ENCODE measurements at regions of chr11 and their contacts with region 1.

Region 1: DNA sequence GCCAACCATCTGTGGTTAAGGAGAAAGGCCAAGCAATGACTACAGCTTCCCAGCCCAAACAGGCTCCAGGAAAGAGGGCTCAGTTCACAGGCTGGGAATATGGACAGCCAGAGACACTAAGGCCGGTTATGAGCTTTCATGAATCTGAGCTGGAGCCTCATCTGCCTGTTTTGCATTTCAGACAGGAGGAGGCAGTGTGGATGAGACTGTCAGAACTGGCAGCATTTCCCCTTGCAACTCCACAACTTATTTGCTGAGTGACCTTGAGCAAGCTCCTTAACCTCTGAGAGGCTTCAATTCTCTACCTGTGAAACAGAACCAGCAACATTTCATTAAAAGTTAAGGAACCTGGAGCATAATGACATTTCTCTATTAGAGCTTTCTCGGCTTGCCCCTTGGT is 264.0 kb downstream of the ETS1 start:
- DNase-seq: peak in 3 of 5 donors; percentile 37 to 55 (median 51)
- H3K4me3 ChIP-seq: peak overlapping the region; percentile 26
- H3K4me3 Mint-ChIP-seq: peak overlapping the region; percentile 34 to 77 (median 68)
- H3K27ac ChIP-seq: peak overlapping the region; percentile 83
- H3K27ac Mint-ChIP-seq: peak overlapping the region; percentile 88 to 99 (median 96)
- H3K4me1 ChIP-seq: peaks cover 95% of the 10 kb centered on the region
- H3K4me1 Mint-ChIP-seq: peaks cover 82 to 92% (median 88%) of the 10 kb centered on the region in 3 donors
- H3K27me3 ChIP-seq: no peaks in the 10 kb centered on the region
- H3K27me3 Mint-ChIP-seq: no peaks in the 10 kb centered on the region

Region 2: DNA sequence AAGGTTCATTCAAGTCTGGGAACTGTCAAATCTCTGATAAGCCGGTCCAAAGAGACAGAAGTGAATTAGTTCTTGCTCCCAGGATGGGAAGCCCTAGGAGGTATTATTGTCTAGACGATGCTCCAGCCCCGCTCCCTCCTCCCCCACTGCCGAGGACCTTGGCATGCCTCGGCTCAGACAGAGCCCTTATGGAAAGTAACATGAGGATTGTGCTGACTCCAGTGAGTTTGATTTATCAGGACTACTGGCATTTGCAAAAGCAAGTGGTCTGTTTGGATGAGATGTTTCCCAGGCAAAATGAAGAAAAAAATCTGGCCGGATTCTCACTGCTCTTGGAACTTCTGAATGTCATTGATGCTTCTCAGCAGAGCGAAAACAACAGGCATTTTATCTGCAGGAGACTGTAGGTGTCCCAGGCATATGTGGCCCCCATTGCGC is 77.0 kb before region 1 on chr11:
- CTCF ChIA-PET with region 1: no interaction called
- POLR2A ChIA-PET with region 1: no interaction called
- DNase-seq: no peak
- H3K4me3 ChIP-seq: no peak overlapping the region
- H3K4me3 Mint-ChIP-seq: no peak overlapping the region
- H3K27ac ChIP-seq: no peak overlapping the region
- H3K27ac Mint-ChIP-seq: no peak overlapping the region
- H3K4me1 ChIP-seq: no peaks in the 10 kb centered on the region
- H3K4me1 Mint-ChIP-seq: no peaks in the 10 kb centered on the region
- H3K27me3 ChIP-seq: no peaks in the 10 kb centered on the region
- H3K27me3 Mint-ChIP-seq: peaks cover 0 to 14% of the 10 kb centered on the region in 2 donors

Region 3: GRCh38 chr11:128290106-128290840 is 33.1 kb before region 1 on chr11:
- CTCF ChIA-PET with region 1: interaction called, 21 read pairs
- POLR2A ChIA-PET with region 1: interaction called, 15 read pairs
- DNase-seq: peak; percentile 41 to 84 (median 80)
- H3K4me3 ChIP-seq: peak overlapping the region; percentile 58
- H3K4me3 Mint-ChIP-seq: peak overlapping the region; percentile 88 to 97 (median 93)
- H3K27ac ChIP-seq: peak overlapping the region; percentile 85
- H3K27ac Mint-ChIP-seq: peak overlapping the region; percentile 98 to 100 (median 99)
- H3K4me1 ChIP-seq: peaks cover 84% of the 10 kb centered on the region
- H3K4me1 Mint-ChIP-seq: peaks cover 89 to 99% (median 98%) of the 10 kb centered on the region in 3 donors
- H3K27me3 ChIP-seq: no peaks in the 10 kb centered on the region
- H3K27me3 Mint-ChIP-seq: no peaks in the 10 kb centered on the region

Region 4: DNA sequence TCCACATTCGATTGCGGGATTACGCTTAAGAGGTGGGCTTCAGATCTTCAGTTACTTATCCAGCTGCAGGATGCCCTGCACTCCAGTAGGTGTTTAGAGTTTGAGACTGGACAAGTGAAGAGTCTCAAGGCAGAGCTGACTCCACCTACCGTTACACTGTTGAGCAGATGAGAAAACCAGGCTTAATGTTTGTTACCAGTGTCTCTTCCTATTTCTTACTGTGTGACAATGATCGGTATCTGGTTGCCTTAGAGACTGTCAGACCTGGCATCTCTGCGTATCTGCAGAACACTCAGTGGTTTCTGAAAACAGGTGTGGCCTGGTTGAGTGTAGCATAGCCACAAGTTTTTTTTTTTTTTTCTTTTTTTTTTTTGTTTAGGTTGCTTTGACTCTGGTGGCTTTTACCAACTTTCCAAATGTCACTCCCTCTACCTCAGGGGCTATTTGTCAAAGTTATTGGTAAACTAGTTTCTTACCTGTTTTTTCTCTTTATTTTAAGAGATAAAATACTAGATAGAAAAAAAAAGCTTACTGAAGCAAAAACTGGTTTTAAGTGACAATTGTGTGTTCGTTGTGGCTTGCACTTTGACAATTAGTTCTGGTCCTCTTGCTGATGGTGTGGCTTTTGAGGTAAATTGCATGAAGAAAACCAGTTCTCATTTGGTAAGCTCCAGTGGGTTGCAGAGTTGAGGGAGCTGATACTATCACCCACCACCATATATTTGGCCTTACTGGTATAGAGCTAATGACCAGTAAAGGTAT is 20.8 kb before region 1 on chr11:
- CTCF ChIA-PET with region 1: interaction called, 27 read pairs
- POLR2A ChIA-PET with region 1: interaction called, 17 read pairs
- DNase-seq: peak; percentile 41 to 92 (median 90)
- H3K4me3 ChIP-seq: peak overlapping the region; percentile 76
- H3K4me3 Mint-ChIP-seq: peak overlapping the region; percentile 88 to 96 (median 92)
- H3K27ac ChIP-seq: peak overlapping the region; percentile 92
- H3K27ac Mint-ChIP-seq: peak overlapping the region; percentile 94 to 100 (median 98)
- H3K4me1 ChIP-seq: peaks cover 97% of the 10 kb centered on the region
- H3K4me1 Mint-ChIP-seq: peaks cover 82 to 98% (median 96%) of the 10 kb centered on the region in 3 donors
- H3K27me3 ChIP-seq: no peaks in the 10 kb centered on the region
- H3K27me3 Mint-ChIP-seq: no peaks in the 10 kb centered on the region

Region 5: DNA sequence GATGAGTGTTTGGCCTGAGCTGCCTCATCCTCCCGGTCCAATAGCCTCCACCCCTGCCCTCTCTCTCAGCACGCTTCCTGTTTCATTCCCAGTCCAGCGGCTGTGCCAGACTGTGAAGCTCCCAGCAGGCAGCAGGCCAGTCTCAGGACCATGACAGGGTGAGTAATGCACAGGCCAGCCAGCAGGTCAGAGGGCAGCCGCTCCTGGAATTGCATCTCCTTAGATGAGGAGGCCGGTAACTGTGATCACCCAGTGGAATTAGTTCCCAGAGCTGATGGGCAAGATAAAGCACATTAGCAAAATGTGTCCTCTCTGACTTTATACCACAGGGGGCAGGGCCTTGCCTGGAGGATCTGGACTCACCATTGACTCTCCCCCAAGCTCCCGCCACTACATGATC is 12.8 kb after region 1 on chr11:
- CTCF ChIA-PET with region 1: interaction called, 18 read pairs
- POLR2A ChIA-PET with region 1: interaction called, 3 read pairs
- DNase-seq: no peak
- H3K4me3 ChIP-seq: no peak overlapping the region
- H3K4me3 Mint-ChIP-seq: no peak overlapping the region
- H3K27ac ChIP-seq: no peak overlapping the region
- H3K27ac Mint-ChIP-seq: peak overlapping the region in 3 of 8 donors; percentile 8 to 64 (median 17)
- H3K4me1 ChIP-seq: peaks cover 23% of the 10 kb centered on the region
- H3K4me1 Mint-ChIP-seq: peaks cover 25 to 69% (median 62%) of the 10 kb centered on the region in 3 donors
- H3K27me3 ChIP-seq: no peaks in the 10 kb centered on the region
- H3K27me3 Mint-ChIP-seq: no peaks in the 10 kb centered on the region

Region 6: DNA sequence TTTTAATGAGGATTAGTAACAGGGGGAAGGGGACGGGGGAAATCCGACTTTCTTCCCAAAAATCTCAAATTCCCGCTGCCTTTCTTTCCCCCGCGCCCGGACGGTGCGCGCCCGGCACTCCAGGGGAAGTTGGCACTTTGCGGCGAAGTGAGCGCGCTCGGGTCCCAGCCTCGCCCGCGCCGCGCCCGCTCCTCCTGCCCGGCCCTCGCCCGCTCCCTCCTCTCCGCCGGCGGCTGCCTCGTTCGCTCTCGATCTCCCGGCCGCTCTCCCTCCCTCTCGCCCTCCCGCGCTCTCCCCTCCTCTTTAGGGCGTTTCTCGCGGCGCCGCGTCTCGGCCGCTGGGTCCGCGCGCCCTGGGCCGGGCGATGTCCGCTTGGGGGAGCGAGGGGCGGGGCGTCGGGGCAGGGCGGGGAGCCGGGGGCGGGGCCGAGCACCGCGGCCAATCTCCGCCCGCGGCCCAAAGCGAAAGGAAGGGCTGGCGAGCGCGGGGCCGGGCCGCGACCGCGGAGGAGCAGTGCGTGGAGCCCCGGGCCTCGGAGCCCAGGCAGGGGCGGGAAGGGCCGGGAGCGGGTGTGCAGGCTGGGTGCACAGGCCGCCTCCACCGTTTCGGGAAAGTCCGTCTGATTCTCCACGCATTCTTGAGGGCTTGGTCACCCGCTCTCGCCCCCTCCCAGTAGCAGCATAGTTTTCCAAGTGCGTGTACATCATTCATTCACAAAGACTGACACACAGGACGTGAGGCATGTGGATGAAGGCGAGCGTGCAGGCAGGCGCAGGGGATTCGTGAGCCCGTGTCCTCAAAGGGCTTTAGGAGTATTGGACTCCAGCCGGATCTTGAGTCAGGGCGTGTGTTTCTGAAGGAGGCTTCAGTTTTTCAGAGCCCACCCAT is 198.9 kb after region 1 on chr11:
- CTCF ChIA-PET with region 1: interaction called, 17 read pairs
- POLR2A ChIA-PET with region 1: interaction called, 4 read pairs
- DNase-seq: peak; percentile 78 to 90 (median 86)
- H3K4me3 ChIP-seq: peak overlapping the region; percentile 97
- H3K4me3 Mint-ChIP-seq: peak overlapping the region; percentile 95 to 100 (median 98)
- H3K27ac ChIP-seq: peak overlapping the region; percentile 92
- H3K27ac Mint-ChIP-seq: peak overlapping the region; percentile 91 to 99 (median 98)
- H3K4me1 ChIP-seq: peaks cover 40% of the 10 kb centered on the region
- H3K4me1 Mint-ChIP-seq: peaks cover 45 to 50% (median 49%) of the 10 kb centered on the region in 3 donors
- H3K27me3 ChIP-seq: no peaks in the 10 kb centered on the region
- H3K27me3 Mint-ChIP-seq: peaks cover 0 to 2% of the 10 kb centered on the region in 2 donors

Measured in CD8-positive, alpha-beta memory T cell (primary cell).